ENCODE measurements at regions of chr15 and their contacts with region 1.

Region 1: DNA sequence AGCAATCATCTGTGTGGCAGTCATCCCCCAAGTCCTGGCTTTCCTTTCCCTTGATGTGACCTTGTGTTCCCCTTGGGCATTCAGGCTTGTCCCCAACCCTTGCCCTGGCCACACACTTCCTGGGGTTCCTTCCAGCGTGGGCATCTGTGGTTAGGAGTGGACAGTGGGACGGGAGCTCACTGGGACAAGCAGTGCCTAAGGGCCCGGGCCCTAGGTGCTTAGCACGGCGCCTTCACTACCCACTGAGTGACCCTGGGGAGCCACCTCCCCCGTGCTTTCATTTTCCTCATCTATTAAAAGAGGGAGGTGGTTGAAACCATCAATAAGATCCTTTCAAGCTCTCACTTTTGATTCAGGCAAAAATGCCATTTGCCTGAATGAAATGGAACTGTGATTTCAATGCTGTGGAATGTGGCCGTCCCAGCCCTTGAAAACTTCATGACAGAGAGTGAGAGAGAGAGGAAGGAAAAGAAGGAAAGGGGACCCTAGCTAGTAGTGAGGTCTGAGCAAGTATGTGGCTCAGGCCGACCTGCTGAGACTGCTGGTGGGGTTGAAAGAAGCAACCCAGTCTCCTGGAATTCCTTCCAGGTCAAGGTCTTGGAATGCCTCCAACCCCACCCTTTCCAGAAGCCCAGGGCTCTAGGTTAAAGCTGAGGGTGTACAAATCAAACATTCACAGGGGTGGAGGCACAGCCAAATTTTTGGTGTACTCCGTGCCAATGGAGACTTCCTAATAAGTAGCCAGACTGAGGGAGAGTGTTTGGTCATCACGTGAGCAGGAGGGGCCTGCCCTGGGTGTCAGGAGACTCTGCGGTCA is 302.9 kb downstream of the TLE3 start:
- DNase-seq: peak; percentile 68 to 84
- ATAC-seq: peak; percentile 79
- H3K4me3 ChIP-seq: no peak overlapping the region
- H3K27ac ChIP-seq: peak overlapping the region; percentile 98 to 100
- H3K4me1 ChIP-seq: no peaks in the 10 kb centered on the region
- H3K27me3 ChIP-seq: no peaks in the 10 kb centered on the region

Region 2: GRCh38 chr15:69593981-69594966 is 200.6 kb before region 1 on chr15:
- intact Hi-C with region 1: loop called in 1 of 2 experiments (anchors 10 kb)
- DNase-seq: peak; percentile 88 to 89
- ATAC-seq: peak; percentile 74
- H3K4me3 ChIP-seq: no peak overlapping the region
- H3K27ac ChIP-seq: peak overlapping the region; percentile 59 to 94
- H3K4me1 ChIP-seq: peaks cover 0 to 9% of the 10 kb centered on the region in 2 donors
- H3K27me3 ChIP-seq: no peaks in the 10 kb centered on the region

Region 3: DNA sequence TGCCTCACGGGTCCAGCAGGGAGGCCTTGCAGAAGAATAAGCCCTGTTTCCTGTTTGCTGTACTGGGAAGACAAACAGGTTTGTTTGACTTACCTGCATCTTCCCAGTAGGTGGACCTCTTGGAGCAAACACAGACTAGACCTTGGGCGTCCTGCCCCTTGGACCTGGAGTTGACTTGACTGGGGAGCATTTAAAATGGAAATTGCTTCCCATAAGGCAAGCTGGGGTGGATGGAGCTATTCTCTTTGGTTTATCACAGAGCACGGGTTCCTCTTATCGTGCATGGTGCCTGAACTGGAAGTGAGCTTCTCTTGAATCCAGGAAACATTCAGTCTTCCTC is 190.8 kb before region 1 on chr15:
- intact Hi-C with region 1: loop called (anchors 10 kb)
- DNase-seq: no peak
- ATAC-seq: no peak
- H3K4me3 ChIP-seq: no peak overlapping the region
- H3K27ac ChIP-seq: no peak overlapping the region
- H3K4me1 ChIP-seq: peaks cover 0 to 3% of the 10 kb centered on the region in 2 donors
- H3K27me3 ChIP-seq: no peaks in the 10 kb centered on the region

Region 4: DNA sequence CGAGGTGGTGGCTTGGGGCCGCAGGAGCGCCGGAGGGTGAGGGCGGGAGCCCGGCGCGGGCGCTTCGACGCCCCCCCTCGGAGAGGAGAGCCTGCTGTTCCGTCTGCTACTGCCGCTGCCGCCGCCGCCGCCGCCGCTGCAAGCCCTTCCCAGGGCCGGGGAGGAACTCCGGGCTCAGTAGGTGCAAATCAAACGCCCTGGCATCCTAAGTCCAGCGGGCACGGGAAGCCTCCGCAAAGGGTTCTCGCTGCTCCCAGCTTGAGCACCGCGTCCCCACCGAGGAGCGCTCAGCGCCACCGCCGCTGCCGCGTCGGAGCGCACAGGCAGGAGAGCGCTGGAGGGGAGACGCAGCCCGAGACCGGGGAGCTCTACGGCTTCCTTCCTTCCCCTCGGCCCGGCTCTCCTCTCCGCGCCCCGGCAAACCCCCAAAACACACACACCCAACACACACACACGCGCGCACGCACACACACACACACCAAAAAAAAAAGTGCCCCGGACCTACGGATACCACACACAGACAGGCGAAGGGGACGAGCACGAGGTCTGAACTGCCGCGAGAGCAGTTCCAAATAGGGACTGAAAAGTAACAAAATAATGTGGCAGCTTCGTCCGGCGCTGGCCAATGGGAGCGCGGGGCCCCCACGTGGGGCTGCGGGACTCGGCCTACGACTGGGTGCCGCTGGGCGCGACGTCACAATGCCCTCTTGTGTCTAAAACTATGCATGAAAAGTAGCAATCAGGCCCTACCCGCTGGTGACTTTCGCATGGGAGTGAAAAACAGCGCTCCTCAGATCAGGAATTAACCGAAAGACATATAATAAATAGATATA is 302.7 kb after region 1 on chr15 and contains the start of gene TLE3:
- intact Hi-C with region 1: loop called in 1 of 2 experiments (anchors 10 kb)
- DNase-seq: peak; percentile 99
- ATAC-seq: peak; percentile 83
- H3K4me3 ChIP-seq: peak within 1 kb of the TSS; percentile 52 to 75
- H3K27ac ChIP-seq: peak within 1 kb of the TSS; percentile 78 to 88
- H3K4me1 ChIP-seq: peaks cover 0 to 2% of the 10 kb centered on the region in 2 donors
- H3K27me3 ChIP-seq: no peaks in the 10 kb centered on the region
- total RNA-seq, gene TLE3: 43.0 to 89.9 TPM